Activated naive CD4-positive, alpha-beta T cell treated with anti-CD3 and anti-CD28 coated beads for 36 hours (primary cell): ENCODE measurements at regions of chrX and their contacts with region 1.

Region 1: DNA sequence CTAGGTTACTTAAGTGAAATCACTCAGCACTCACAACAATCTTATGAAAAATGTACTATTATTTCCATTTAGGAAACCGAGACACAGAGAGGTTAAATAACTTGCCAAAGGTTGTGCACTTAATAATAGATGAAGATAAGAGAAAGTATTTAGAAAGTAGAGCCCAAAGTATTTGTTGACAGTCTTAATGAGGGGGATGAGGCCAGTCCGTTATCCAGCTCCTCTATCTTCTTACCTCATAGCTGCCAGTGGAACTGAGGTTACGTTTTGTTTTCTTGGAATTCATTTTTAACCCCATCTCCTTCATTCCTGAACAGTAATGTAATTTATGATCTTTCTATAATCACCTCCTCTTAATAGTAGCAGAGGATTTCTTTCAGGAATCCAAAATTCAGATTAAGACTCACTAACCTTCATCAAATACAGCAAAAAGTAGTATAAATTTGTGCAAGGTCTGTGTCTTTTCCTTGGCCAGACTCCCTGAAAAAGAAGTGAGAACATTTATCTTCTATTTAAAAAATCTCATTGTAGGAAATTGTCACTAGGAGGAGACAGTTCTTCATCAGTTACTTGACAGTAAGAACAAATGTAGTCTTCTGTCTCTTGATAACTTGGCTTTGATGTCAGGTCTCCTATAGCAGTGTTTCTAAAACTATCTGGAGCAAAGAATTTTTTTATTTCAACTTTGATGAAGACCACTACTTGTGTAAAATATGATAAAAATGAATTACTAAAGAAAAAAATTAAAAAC is 35.5 kb downstream of the F8 start:
- DNase-seq: no peak
- H3K4me3 Mint-ChIP-seq: no peak overlapping the region
- H3K27ac Mint-ChIP-seq: no peak overlapping the region
- H3K4me1 Mint-ChIP-seq: peaks cover 19% of the 10 kb centered on the region
- H3K27me3 Mint-ChIP-seq: no peaks in the 10 kb centered on the region

Region 2: GRCh38 chrX:155056877-155057792 is 70.1 kb after region 1 on chrX:
- CTCF ChIA-PET with region 1: interaction called, 19 read pairs
- intact Hi-C with region 1: loop called (anchors 1 kb)
- DNase-seq: peak; percentile 57
- H3K4me3 Mint-ChIP-seq: peak overlapping the region; percentile 48
- H3K27ac Mint-ChIP-seq: peak overlapping the region; percentile 53
- H3K4me1 Mint-ChIP-seq: peaks cover 29% of the 10 kb centered on the region
- H3K27me3 Mint-ChIP-seq: no peaks in the 10 kb centered on the region

Region 3: DNA sequence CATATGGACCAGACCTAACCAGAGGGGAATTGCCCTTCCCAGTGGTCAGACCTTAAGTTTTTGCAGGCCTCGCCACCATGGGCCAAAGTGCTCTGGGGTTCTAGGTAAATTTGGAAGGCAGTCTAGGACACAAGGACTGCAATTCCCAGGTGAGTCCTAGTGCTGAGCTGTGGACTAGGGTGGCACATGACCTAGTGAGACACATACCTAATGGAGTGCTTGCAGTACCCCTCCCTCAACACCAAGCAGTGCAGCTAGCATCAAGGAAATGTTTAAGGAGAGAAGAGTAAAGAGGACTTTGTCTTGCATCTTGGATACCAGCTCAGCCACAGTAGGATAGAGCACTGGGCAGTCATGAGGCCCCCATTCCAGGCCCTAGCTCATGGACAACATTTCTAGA is 145.1 kb after region 1 on chrX:
- CTCF ChIA-PET with region 1: no interaction called
- intact Hi-C with region 1: no loop called
- DNase-seq: no peak
- H3K4me3 Mint-ChIP-seq: no peak overlapping the region
- H3K27ac Mint-ChIP-seq: no peak overlapping the region
- H3K4me1 Mint-ChIP-seq: no peaks in the 10 kb centered on the region
- H3K27me3 Mint-ChIP-seq: no peaks in the 10 kb centered on the region

Region 4: DNA sequence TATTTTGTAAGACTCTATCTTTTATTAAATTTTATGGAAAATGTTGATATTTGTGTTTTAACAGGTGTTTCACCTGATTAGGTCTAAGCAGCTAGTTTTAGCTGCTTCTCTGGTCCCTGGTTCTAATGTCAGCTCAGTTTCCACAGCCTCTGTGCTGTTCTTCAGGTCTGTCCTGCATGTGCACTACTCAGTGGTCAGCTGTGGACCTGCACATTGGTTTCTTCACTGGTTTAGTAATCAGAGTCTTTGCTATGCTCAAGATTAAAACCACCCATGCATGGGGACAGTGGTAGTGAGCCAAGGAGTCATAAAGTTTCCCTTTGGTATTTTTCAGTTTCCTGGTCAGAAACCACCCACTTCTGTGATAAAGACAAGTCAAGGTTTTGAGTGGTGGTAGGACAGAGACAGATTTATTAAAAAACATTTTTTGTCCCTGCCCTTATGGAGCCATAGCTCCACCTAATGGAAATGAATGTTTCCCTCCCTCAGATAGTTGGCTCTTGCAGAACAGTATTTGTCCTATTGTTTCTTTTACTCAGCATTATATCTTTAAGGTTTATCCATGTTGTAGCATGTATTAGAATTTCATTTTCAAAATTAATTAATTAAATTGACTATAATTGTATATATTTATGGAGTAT is 192.5 kb after region 1 on chrX:
- CTCF ChIA-PET with region 1: no interaction called
- intact Hi-C with region 1: loop called (anchors 5 kb)
- DNase-seq: no peak
- H3K4me3 Mint-ChIP-seq: no peak overlapping the region
- H3K27ac Mint-ChIP-seq: no peak overlapping the region
- H3K4me1 Mint-ChIP-seq: peaks cover 1% of the 10 kb centered on the region
- H3K27me3 Mint-ChIP-seq: no peaks in the 10 kb centered on the region